HepG2 (cell line): ENCODE measurements at regions of chr12 and their contacts with region 1.

Region 1: GRCh38 chr12:58176296-58176869 is 235.0 kb downstream of the ATP23 start:
- DNase-seq: peak; percentile 49
- ATAC-seq: peak; percentile 96
- H3K4me3 ChIP-seq: no peak overlapping the region
- H3K27ac ChIP-seq: no peak overlapping the region
- H3K4me1 ChIP-seq: no peaks in the 10 kb centered on the region
- H3K27me3 ChIP-seq: peaks cover 0 to 10% of the 10 kb centered on the region in 2 experiments; a peak in 1 of 5 replicates
- CTCF ChIP-seq: peak; percentile 67
- EP300 ChIP-seq: no peak
- POLR2A ChIP-seq: no peak
- RAD21 ChIP-seq: no peak

Region 2: DNA sequence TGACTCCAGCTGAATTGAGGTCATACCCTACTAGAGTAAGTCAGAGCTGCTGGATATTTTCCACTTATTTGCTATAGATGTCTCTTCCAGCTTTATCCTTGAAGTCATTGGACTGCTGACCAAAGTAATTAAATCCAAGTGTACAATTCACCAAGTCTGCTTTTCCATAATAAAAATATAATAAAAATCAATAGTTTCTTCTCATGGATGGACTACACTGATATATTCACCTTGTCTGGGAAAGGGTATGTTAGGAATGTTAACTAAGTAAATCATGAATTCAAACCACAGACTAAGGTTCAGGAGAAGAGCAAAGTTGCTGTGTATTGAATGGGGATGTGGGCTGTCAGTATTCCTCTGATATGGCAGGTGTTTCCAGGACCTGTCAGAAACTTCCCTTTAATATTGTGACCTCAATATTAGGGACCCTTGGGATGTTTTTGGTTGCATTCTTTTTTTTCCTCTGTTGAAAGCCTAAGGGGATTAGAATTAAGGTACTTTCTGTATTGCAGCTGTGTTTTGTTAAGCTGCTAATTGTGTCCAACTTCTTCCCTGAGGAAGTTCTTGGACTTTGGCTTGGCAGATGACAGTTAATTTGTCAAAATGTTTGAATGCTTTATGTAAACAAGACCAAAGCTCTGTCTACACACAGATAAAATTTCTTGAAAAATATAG is 49.0 kb after region 1 on chr12:
- CTCF ChIA-PET with region 1: no interaction called
- POLR2A ChIA-PET with region 1: no interaction called
- in situ Hi-C with region 1: no loop called
- intact Hi-C with region 1: loop called (anchors 2 kb)
- DNase-seq: peak; percentile 62
- ATAC-seq: peak; percentile 99
- H3K4me3 ChIP-seq: peak overlapping the region in 1 of 3 experiments; percentile 15; a peak in 1 of 6 replicates
- H3K27ac ChIP-seq: peak overlapping the region; percentile 74
- H3K4me1 ChIP-seq: peaks cover 29% of the 10 kb centered on the region
- H3K27me3 ChIP-seq: no peaks in the 10 kb centered on the region
- CTCF ChIP-seq: no peak
- EP300 ChIP-seq: no peak
- POLR2A ChIP-seq: no peak
- RAD21 ChIP-seq: no peak

Region 3: GRCh38 chr12:58302485-58303011 is 126.2 kb after region 1 on chr12:
- CTCF ChIA-PET with region 1: no interaction called
- POLR2A ChIA-PET with region 1: no interaction called
- in situ Hi-C with region 1: no loop called
- intact Hi-C with region 1: loop called (anchors 5 kb)
- DNase-seq: no peak
- ATAC-seq: no peak
- H3K4me3 ChIP-seq: no peak overlapping the region
- H3K27ac ChIP-seq: no peak overlapping the region
- H3K4me1 ChIP-seq: no peaks in the 10 kb centered on the region
- H3K27me3 ChIP-seq: no peaks in the 10 kb centered on the region
- CTCF ChIP-seq: peak; percentile 37; the same call in 1 of the 2 replicates
- EP300 ChIP-seq: no peak
- POLR2A ChIP-seq: no peak
- RAD21 ChIP-seq: no peak